ENCODE measurements at regions of chr7 and their contacts with region 1.

Region 1: GRCh38 chr7:131625817-131626372 is 69.5 kb upstream of the PODXL start:
- DNase-seq: peak; percentile 76 to 82
- H3K4me3 ChIP-seq: no peak overlapping the region; a peak in 1 of 8 replicates
- H3K27ac ChIP-seq: peak overlapping the region; percentile 53; the same call in 1 of the 2 replicates
- H3K4me1 ChIP-seq: peaks cover 7 to 22% (median 15%) of the 10 kb centered on the region in 4 experiments
- H3K27me3 ChIP-seq: no peaks in the 10 kb centered on the region
- CTCF ChIP-seq: peak in 2 of 3 experiments; percentile 12 to 34; a peak in 3 of 4 replicates
- EP300 ChIP-seq: no peak; a peak in 1 of 3 replicates
- POLR2A ChIP-seq: no peak
- RAD21 ChIP-seq: peak in 1 of 2 experiments; percentile 20; a peak in 2 of 4 replicates

Region 2: DNA sequence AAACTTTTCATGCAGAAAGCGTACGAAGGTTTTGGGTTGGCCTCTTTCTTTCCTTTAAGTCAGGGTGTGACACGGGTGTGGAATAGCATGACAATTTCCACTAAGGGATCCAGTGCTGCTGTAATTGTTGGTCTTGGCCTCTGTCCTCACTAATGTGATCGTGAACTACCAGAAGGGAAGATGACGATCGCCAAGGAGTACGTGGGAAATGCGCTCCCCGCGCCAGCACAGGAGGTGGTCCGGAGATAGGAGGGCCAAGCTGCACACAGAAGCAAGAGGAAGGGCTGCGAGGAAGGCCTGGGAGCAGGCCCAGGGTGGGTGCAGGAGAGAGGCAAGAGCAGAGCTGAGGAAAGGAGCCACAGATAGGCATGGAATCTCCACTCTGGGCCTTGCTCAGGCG is 10.2 kb after region 1 on chr7:
- CTCF ChIA-PET with region 1: interaction called, 38 read pairs
- POLR2A ChIA-PET with region 1: interaction called, 9 read pairs
- DNase-seq: no peak
- H3K4me3 ChIP-seq: no peak overlapping the region
- H3K27ac ChIP-seq: no peak overlapping the region
- H3K4me1 ChIP-seq: peaks cover 0 to 15% (median 5%) of the 10 kb centered on the region in 4 experiments; a peak in 3 of 7 replicates
- H3K27me3 ChIP-seq: peaks cover 0 to 3% (median 0%) of the 10 kb centered on the region in 4 experiments; a peak in 1 of 7 replicates
- CTCF ChIP-seq: no peak
- EP300 ChIP-seq: no peak
- POLR2A ChIP-seq: no peak
- RAD21 ChIP-seq: no peak

Measured in H1 (cell line).